Body of pancreas (tissue), 4 donors: ENCODE measurements at regions of chr1 and their contacts with region 1.

Region 1: DNA sequence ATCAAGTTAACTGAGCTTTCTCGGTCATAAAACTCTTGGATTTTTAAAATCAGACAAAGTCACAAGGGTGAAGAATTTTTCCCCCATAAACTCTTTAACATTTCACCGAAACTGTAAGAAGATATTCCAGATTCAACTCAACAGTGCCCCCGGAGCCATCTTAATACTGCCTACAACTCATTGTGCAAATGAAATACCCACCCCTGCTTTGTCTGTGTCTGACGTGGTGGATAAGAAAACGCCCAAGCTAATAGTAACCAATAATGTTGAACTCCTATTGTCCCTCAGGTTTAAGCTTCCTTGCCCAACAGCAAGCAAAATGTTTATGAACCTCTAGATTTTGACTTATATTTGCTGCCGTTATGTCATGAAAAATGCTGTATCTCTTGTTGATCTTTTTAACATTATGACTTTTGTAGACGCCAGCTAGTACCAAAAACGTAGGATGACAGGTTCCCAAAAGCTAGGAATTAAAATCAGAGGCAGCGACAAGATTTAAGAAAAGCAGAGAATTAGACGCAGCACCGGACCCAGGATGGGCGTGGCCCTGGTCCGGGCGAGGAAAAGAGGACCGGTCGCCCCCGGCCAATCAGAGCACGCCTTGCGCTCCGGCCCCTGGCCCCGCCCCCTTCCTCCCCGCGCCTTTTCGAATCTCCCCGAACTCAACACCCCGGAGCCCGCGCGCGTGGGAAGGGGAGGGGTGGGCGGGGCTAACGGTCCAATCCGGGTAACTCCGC is 1.1 kb downstream of the STMN1 start:
- DNase-seq: peak; percentile 90 to 94 (median 92)
- ATAC-seq: peak; percentile 88
- H3K4me3 ChIP-seq: peak overlapping the region; percentile 66 to 70
- H3K27ac ChIP-seq: peak overlapping the region in 1 of 4 donors; percentile 56
- H3K4me1 ChIP-seq: peaks cover 27% of the 10 kb centered on the region
- H3K27me3 ChIP-seq: no peaks in the 10 kb centered on the region
- CTCF ChIP-seq: no peak
- POLR2A ChIP-seq: no peak

Region 2: DNA sequence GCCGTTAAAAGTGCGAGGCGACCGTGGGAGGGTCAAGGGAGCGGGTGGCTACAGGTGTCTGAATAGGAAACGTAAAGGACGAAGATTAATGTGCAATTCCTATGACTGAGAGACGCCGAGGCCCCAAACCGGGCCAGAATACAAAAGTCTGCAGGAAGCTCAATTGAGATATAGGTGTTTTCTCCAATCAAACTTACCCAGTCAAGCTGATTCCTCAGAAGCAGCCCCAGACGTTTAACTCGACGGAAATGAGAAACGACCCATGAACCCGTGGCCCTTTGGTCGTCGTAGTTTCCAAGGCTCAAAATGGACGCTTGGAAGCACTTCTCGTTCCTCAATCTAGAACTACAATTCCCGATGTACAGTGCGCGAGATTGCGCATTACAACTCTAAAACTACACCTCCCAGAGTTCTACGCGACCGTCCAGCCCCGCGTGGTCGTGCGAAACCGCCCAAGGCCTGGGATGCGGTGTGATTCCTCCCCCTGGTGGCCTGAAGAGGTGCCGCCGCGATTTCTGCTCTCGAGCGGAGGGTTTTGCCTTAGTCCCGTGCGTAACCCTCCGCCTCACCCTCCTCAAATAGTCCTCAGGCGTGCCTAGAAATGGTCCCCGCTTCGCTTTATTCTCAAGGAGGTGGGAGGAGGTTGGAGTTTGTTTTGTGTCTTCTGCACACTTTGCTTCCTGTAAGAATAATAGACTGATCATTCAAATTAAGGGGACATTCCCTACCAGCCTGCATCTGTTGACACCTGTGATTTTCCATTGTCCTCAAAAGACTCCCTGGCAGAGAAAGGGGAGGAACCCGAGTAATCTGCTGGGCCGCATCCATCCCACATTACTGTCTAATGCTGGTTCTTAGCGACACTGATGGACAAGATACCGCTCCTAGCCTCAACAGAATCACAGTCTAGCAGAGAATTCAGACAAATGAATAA is 93.0 kb after region 1 on chr1 and contains the start of gene PAFAH2:
- intact Hi-C with region 1: loop called (anchors 5 kb)
- DNase-seq: peak; percentile 98 to 99 (median 98)
- ATAC-seq: peak; percentile 99
- H3K4me3 ChIP-seq: peak within 1 kb of the TSS; percentile 36 to 46
- H3K27ac ChIP-seq: peak within 1 kb of the TSS; percentile 34 to 76 (median 56)
- H3K4me1 ChIP-seq: peaks cover 13% of the 10 kb centered on the region
- H3K27me3 ChIP-seq: no peaks in the 10 kb centered on the region
- CTCF ChIP-seq: peak; percentile 81 to 100 (median 100)
- POLR2A ChIP-seq: peak in 2 of 3 donors; percentile 51 to 58
- total RNA-seq, gene PAFAH2: 14.8 to 46.4 TPM